Left ventricle myocardium superior (tissue), 1 donor: ENCODE measurements at regions of chr1 and their contacts with region 1.

Region 1: DNA sequence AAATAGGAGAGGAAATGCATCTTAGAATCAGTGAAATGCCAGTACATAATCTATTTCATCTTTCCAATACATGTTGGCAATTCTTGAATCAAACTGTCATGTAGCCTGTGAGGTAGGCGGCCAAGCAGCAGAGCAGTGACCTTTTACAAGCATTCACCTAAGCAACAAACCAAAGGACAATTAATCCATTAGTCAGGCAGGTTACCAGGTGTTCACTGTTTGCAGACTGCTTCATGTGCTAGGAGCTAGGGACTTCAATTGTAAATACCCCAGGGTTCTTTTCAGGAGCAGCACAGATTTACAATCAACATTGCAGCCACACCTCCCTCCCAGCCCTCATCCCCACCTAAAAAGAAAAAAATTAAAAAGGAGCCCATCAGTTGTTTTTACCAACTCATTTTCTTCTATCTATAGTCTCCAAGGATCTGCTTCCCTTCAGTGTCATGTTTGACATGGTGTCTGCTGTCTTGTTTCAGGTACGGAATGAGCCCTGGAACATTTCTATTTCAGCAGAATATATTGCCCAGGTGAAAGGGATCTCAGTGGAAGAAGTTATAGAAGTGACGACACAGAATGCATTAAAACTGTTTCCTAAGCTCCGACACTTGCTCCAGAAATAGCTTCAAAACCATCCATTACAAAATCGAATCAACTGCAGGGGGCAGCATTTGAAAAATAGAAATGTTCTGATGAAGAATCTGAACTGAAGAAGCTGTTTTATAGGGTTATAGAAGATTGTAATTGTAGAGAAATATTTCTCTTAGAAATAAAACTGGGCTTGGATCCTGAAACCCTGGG is 23.0 kb downstream of the TATDN3 start:
- DNase-seq: no peak
- ATAC-seq: no peak

Region 2: GRCh38 chr1:212586206-212587015 is 228.3 kb before region 1 on chr1:
- intact Hi-C with region 1: no loop called
- DNase-seq: no peak
- ATAC-seq: no peak

Region 3: GRCh38 chr1:212994926-212995325 is 180.2 kb after region 1 on chr1:
- intact Hi-C with region 1: loop called (anchors 5 kb)
- DNase-seq: no peak
- ATAC-seq: no peak

Region 4: GRCh38 chr1:213669964-213670691 is 855.4 kb after region 1 on chr1:
- intact Hi-C with region 1: no loop called
- DNase-seq: no peak
- ATAC-seq: no peak